Panc1 (cell line): ENCODE measurements at regions of chr1 and their contacts with region 1.

Region 1: DNA sequence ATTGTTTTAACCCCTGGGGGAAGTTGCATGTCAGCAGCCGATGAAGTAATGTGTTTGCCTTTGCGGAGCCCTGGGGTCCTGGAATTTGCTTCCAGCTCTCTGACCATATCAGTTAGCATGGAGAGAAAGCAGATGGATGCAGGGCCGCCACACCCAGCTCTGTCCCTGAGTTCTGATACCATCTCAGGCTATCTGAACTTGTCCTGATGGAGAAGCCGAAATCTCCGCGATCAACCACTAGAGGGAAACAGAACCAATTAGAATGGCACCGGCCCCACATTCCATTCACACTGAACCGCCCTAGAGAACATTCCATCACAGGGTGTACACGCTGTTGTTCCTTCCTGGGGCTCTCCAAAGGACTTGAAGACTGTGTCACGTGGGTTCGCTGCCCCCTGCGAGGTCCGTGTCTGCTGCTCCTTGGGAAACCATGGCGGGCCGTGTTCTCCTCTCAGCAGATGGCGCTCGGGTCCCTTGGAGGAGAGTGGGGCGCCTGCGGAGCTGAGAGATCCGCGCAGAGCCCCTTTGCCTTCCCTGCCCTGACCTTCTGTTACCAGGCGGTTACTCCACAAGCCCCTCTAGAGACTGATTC is 75.4 kb downstream of the ABCA4 start:
- DNase-seq: peak; percentile 75
- ATAC-seq: peak; percentile 89
- H3K4me3 ChIP-seq: no peak overlapping the region
- H3K27ac ChIP-seq: peak overlapping the region; percentile 94
- H3K4me1 ChIP-seq: peaks cover 43% of the 10 kb centered on the region
- H3K27me3 ChIP-seq: no peaks in the 10 kb centered on the region
- CTCF ChIP-seq: peak; percentile 88

Region 2: GRCh38 chr1:94033849-94034248 is 11.7 kb before region 1 on chr1:
- CTCF ChIA-PET with region 1: no interaction called
- POLR2A ChIA-PET with region 1: no interaction called
- in situ Hi-C with region 1: no loop called
- intact Hi-C with region 1: no loop called
- DNase-seq: no peak
- ATAC-seq: no peak
- H3K4me3 ChIP-seq: no peak overlapping the region
- H3K27ac ChIP-seq: peak overlapping the region; percentile 29; the same call in 1 of the 2 replicates
- H3K4me1 ChIP-seq: no peaks in the 10 kb centered on the region; the same call in 1 of the 2 replicates
- H3K27me3 ChIP-seq: no peaks in the 10 kb centered on the region
- CTCF ChIP-seq: no peak

Region 3: GRCh38 chr1:94160811-94161210 is 115.2 kb after region 1 on chr1:
- CTCF ChIA-PET with region 1: no interaction called
- POLR2A ChIA-PET with region 1: no interaction called
- in situ Hi-C with region 1: no loop called
- intact Hi-C with region 1: loop called (anchors 5 kb)
- DNase-seq: no peak
- ATAC-seq: no peak; the same call in 1 of the 2 replicates
- H3K4me3 ChIP-seq: no peak overlapping the region
- H3K27ac ChIP-seq: peak overlapping the region; percentile 58
- H3K4me1 ChIP-seq: peaks cover 3% of the 10 kb centered on the region
- H3K27me3 ChIP-seq: no peaks in the 10 kb centered on the region
- CTCF ChIP-seq: no peak

Region 4: DNA sequence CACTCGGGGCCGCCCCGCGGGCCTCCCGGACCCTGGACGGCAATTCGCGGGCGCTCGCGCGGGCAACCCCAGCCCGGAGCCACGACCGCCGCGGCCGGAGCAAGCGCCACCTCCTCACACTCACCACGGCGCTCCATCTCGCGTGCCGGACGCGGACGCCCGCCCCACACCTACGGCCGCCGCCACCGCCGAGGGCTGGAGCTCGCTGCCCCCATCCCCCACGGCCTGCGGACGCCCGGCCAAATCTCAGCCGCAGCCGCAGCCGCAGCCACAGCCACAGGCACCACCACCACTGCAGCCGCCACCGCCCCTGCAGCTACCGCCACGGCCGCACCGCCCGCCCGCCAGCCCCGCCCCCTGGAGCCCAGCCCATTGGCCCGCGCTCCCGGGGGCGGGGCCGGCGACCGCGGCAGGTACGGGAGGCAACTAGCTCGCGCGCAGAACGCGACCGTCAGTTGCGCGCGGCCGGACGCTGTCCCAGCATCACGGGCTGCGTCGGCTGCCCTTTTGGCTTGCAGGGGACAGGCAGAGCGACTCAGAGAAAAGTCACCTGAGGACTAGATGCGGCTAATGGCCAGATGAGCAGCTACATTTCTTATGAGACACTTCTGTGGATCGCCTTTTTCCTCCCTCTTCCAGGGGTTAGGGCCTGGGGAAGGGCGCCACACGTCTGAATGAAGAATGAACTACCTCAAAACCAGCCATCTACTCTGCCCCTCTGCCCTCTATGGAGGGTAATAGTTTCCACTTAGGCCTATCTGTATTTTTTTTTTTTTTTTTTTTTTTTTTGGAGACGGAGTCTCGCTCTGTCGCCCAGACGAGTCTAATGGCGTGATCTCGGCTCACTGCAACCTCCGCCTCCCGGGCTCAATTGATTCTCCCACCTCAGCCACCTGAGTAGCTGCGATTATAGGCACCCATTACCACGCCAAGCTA is 192.0 kb after region 1 on chr1 and contains the start of gene ARHGAP29:
- CTCF ChIA-PET with region 1: interaction called, 13 read pairs
- POLR2A ChIA-PET with region 1: no interaction called
- in situ Hi-C with region 1: no loop called
- intact Hi-C with region 1: loop called (anchors 10 kb)
- DNase-seq: no peak
- ATAC-seq: peak; percentile 85
- H3K4me3 ChIP-seq: peak within 1 kb of the TSS; percentile 90 to 98
- H3K27ac ChIP-seq: peak within 1 kb of the TSS; percentile 99
- H3K4me1 ChIP-seq: peaks cover 36% of the 10 kb centered on the region
- H3K27me3 ChIP-seq: no peaks in the 10 kb centered on the region
- CTCF ChIP-seq: no peak
- total RNA-seq, gene ARHGAP29: 197 TPM

Region 5: GRCh38 chr1:94270801-94271203 is 225.2 kb after region 1 on chr1:
- CTCF ChIA-PET with region 1: no interaction called
- POLR2A ChIA-PET with region 1: no interaction called
- in situ Hi-C with region 1: no loop called
- intact Hi-C with region 1: no loop called
- DNase-seq: no peak
- ATAC-seq: peak; percentile 60; the same call in 1 of the 2 replicates
- H3K4me3 ChIP-seq: no peak overlapping the region
- H3K27ac ChIP-seq: peak overlapping the region; percentile 54; the same call in 1 of the 2 replicates
- H3K4me1 ChIP-seq: no peaks in the 10 kb centered on the region; the same call in 1 of the 2 replicates
- H3K27me3 ChIP-seq: no peaks in the 10 kb centered on the region
- CTCF ChIP-seq: no peak

Region 6: GRCh38 chr1:94456736-94457135 is 411.2 kb after region 1 on chr1:
- CTCF ChIA-PET with region 1: no interaction called
- POLR2A ChIA-PET with region 1: interaction called, 10 read pairs
- in situ Hi-C with region 1: no loop called
- intact Hi-C with region 1: no loop called
- DNase-seq: no peak
- ATAC-seq: no peak
- H3K4me3 ChIP-seq: no peak overlapping the region
- H3K27ac ChIP-seq: no peak overlapping the region
- H3K4me1 ChIP-seq: no peaks in the 10 kb centered on the region
- H3K27me3 ChIP-seq: no peaks in the 10 kb centered on the region
- CTCF ChIP-seq: no peak

Region 7: DNA sequence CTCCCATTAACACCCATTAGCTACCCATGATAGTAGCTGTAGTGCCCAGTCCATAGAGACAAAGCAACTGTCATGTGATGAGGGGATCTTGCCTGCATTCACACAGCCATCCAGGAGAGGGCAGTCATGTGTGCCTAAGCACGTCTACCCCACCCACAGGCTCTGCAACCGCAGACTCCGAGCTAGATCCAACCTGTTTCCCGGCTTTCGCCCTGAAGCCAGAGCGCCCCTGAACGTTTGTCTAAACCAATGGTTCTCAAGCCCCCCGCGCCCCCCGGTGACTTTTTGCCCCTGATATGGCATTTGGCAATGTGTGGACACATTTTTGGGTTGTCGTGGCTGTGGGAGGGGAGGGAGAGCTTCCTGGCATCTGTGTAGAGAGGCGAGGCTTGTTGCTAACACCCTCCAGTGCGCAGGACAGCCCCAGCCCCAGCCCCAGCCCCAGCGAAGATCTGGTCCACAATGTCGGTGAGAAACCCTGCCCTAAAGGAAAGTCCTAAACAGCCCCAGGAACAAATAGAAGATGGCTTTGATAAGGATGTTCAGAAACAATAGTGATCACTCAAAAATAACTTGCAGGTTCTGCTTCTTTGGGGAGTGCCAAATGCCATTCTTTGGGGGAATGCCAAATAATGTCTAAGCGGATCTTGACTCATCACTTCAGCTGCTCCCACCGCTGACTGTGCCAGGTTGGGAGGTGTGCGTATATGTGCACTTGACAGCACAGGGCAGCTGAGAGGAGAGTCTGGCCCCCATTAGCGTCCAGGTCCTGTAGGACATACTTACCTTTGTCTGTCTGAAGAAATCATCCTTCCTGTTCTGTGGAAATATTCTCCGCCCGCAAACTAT is 809.1 kb after region 1 on chr1:
- CTCF ChIA-PET with region 1: no interaction called
- POLR2A ChIA-PET with region 1: no interaction called
- in situ Hi-C with region 1: no loop called
- intact Hi-C with region 1: no loop called
- DNase-seq: peak; percentile 70
- ATAC-seq: peak; percentile 98
- H3K4me3 ChIP-seq: peak overlapping the region; percentile 38 to 61
- H3K27ac ChIP-seq: no peak overlapping the region
- H3K4me1 ChIP-seq: no peaks in the 10 kb centered on the region
- H3K27me3 ChIP-seq: no peaks in the 10 kb centered on the region
- CTCF ChIP-seq: peak; percentile 83